Natural killer cell (primary cell): ENCODE measurements at regions of chr7 and their contacts with region 1.

Region 1: GRCh38 chr7:6589829-6590644 is at the start of gene INTS15:
- DNase-seq: peak; percentile 88 to 95
- ATAC-seq: peak; percentile 87 to 98 (median 89)
- H3K4me3 ChIP-seq: peak within 1 kb of the TSS; percentile 66
- H3K4me3 Mint-ChIP-seq: peak within 1 kb of the TSS; percentile 92
- H3K27ac ChIP-seq: peak within 1 kb of the TSS; percentile 64
- H3K27ac Mint-ChIP-seq: peak within 1 kb of the TSS; percentile 92 to 93
- H3K4me1 ChIP-seq: peaks cover 16% of the 10 kb centered on the region
- H3K4me1 Mint-ChIP-seq: peaks cover 8 to 18% of the 10 kb centered on the region in 2 donors
- H3K27me3 ChIP-seq: no peaks in the 10 kb centered on the region
- H3K27me3 Mint-ChIP-seq: no peaks in the 10 kb centered on the region
- CTCF ChIP-seq: peak; percentile 69
- total RNA-seq, gene INTS15: 47.5 to 70.1 (median 60.7) TPM

Region 2: DNA sequence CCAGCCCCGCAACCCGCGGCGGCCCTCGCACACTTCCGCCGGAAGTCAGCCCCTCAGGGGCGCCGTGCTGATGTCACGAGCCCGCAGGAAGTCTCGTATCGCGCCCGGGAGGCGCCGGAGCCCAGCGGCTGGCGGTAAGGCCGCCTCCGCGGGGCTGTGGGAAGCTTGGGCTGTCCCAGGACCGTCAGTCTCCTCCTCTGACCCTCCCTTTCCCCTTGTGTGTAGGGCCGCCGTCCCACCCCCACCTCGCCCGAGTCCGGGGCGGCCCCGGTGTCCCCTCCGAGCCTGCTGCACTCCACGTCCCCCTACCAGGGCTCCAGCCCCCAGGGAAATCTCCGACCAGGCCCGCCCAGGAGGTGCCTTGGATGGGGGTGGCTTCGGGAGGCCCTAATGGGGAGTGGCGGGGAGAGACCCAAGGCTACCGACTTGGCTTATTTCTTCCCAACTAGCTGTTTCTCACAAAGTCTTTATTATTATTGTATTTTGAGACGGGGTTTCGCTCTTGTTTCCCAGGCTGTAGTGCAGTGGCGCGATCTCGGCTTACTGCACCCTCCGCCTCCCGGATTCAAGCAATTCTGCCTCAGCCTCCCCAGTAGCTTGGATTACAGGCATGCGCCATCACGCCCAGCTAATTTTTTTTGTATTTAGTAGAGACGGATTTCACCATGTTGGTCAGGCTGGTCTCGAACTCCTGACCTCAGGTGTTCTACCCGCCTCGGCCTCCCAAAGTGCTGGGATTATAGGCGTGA is 12.5 kb before region 1 on chr7 and contains the start of gene ZDHHC4:
- intact Hi-C with region 1: loop called (anchors 1 kb)
- DNase-seq: peak; percentile 86 to 94
- ATAC-seq: peak; percentile 92 to 96 (median 96)
- H3K4me3 ChIP-seq: peak within 1 kb of the TSS; percentile 92
- H3K4me3 Mint-ChIP-seq: peak within 1 kb of the TSS; percentile 90
- H3K27ac ChIP-seq: peak within 1 kb of the TSS; percentile 98
- H3K27ac Mint-ChIP-seq: peak within 1 kb of the TSS; percentile 89 to 97
- H3K4me1 ChIP-seq: peaks cover 15% of the 10 kb centered on the region
- H3K4me1 Mint-ChIP-seq: peaks cover 11 to 12% of the 10 kb centered on the region in 2 donors
- H3K27me3 ChIP-seq: no peaks in the 10 kb centered on the region
- H3K27me3 Mint-ChIP-seq: peaks cover 3 to 5% of the 10 kb centered on the region in 2 donors
- CTCF ChIP-seq: no peak
- total RNA-seq, gene ZDHHC4: 29.4 to 37.6 (median 35.3) TPM

Region 3: GRCh38 chr7:6637544-6638229 is 47.6 kb after region 1 on chr7:
- intact Hi-C with region 1: loop called (anchors 1 kb)
- DNase-seq: peak; percentile 60 to 75
- ATAC-seq: peak; percentile 81 to 85 (median 81)
- H3K4me3 ChIP-seq: peak overlapping the region; percentile 52
- H3K4me3 Mint-ChIP-seq: peak overlapping the region; percentile 85
- H3K27ac ChIP-seq: peak overlapping the region; percentile 57
- H3K27ac Mint-ChIP-seq: peak overlapping the region; percentile 56 to 93
- H3K4me1 ChIP-seq: peaks cover 42% of the 10 kb centered on the region
- H3K4me1 Mint-ChIP-seq: peaks cover 20 to 44% of the 10 kb centered on the region in 2 donors
- H3K27me3 ChIP-seq: no peaks in the 10 kb centered on the region
- H3K27me3 Mint-ChIP-seq: no peaks in the 10 kb centered on the region
- CTCF ChIP-seq: peak; percentile 26